ENCODE measurements at regions of chrX and their contacts with region 1.

Region 1: GRCh38 chrX:65595460-65595876 is 60.9 kb upstream of the LAS1L start:
- DNase-seq: peak; percentile 95
- H3K4me3 ChIP-seq: no peak overlapping the region
- H3K27ac ChIP-seq: peak overlapping the region; percentile 31
- H3K4me1 ChIP-seq: peaks cover 19% of the 10 kb centered on the region
- H3K27me3 ChIP-seq: no peaks in the 10 kb centered on the region
- CTCF ChIP-seq: peak; percentile 99

Region 2: GRCh38 chrX:64994131-64994798 is 601.2 kb before region 1 on chrX:
- CTCF ChIA-PET with region 1: no interaction called
- POLR2A ChIA-PET with region 1: no interaction called
- intact Hi-C with region 1: no loop called
- DNase-seq: no peak
- H3K4me3 ChIP-seq: no peak overlapping the region
- H3K27ac ChIP-seq: no peak overlapping the region
- H3K4me1 ChIP-seq: no peaks in the 10 kb centered on the region
- H3K27me3 ChIP-seq: no peaks in the 10 kb centered on the region
- CTCF ChIP-seq: no peak

Region 3: GRCh38 chrX:65045001-65045400 is 550.5 kb before region 1 on chrX:
- CTCF ChIA-PET with region 1: no interaction called
- POLR2A ChIA-PET with region 1: no interaction called
- intact Hi-C with region 1: no loop called
- DNase-seq: no peak
- H3K4me3 ChIP-seq: no peak overlapping the region
- H3K27ac ChIP-seq: no peak overlapping the region
- H3K4me1 ChIP-seq: no peaks in the 10 kb centered on the region
- H3K27me3 ChIP-seq: no peaks in the 10 kb centered on the region
- CTCF ChIP-seq: no peak

Region 4: GRCh38 chrX:65610040-65610439 is 14.6 kb after region 1 on chrX:
- CTCF ChIA-PET with region 1: no interaction called
- POLR2A ChIA-PET with region 1: no interaction called
- intact Hi-C with region 1: no loop called
- DNase-seq: peak; percentile 40
- H3K4me3 ChIP-seq: no peak overlapping the region
- H3K27ac ChIP-seq: no peak overlapping the region
- H3K4me1 ChIP-seq: no peaks in the 10 kb centered on the region
- H3K27me3 ChIP-seq: no peaks in the 10 kb centered on the region
- CTCF ChIP-seq: no peak

Region 5: GRCh38 chrX:65633826-65634225 is 38.4 kb after region 1 on chrX:
- CTCF ChIA-PET with region 1: no interaction called
- POLR2A ChIA-PET with region 1: no interaction called
- intact Hi-C with region 1: no loop called
- DNase-seq: no peak
- H3K4me3 ChIP-seq: no peak overlapping the region
- H3K27ac ChIP-seq: no peak overlapping the region
- H3K4me1 ChIP-seq: no peaks in the 10 kb centered on the region
- H3K27me3 ChIP-seq: no peaks in the 10 kb centered on the region
- CTCF ChIP-seq: no peak

Region 6: DNA sequence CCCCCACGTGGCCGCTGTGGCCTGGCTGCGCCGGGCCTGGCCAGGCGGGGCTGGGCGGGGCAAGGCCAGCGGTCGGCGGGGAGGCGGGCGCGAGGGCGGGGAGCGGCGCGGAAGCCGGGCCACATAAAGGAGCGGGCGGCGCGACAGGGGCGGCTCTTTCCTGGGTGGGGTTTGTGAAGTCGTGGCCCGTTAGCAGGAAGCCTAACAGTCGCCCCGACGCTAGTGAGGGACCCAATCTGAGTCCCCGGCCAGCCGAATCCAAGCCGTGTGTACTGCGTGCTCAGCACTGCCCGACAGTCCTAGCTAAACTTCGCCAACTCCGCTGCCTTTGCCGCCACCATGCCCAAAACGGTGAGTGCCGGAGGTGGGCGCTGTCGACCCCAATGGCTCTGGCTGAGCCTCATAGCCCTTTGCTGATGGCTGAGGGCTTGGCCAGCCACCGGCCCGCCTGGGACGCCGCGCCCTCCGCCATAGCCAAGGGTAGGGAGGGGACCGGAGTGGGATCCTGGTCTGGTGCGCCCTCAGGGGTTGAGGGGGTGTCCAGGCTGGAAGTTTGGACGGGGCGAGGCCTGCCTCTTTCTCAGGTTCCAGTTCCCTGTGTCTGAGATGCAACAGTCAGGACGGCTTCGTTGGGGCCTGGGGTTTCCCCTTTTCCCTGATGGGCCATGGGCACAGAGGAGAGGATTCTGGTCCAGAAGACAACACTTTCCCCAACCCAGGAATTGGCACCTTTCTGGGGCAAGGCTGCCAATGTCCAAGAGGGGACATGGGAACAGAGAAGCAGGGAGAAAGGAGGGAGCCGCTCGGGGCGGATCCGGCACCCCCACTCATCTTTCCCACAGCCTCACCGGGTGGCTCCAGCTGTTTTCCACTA is 72.3 kb after region 1 on chrX and contains the start of gene MSN:
- CTCF ChIA-PET with region 1: no interaction called
- POLR2A ChIA-PET with region 1: no interaction called
- intact Hi-C with region 1: loop called (anchors 5 kb)
- DNase-seq: peak; percentile 57
- H3K4me3 ChIP-seq: peak within 1 kb of the TSS; percentile 77
- H3K27ac ChIP-seq: peak within 1 kb of the TSS; percentile 93
- H3K4me1 ChIP-seq: peaks cover 20% of the 10 kb centered on the region
- H3K27me3 ChIP-seq: no peaks in the 10 kb centered on the region
- CTCF ChIP-seq: peak; percentile 33; the same call in 1 of the 2 replicates
- total RNA-seq, gene MSN: 415 and 468 TPM in 2 replicates

Region 7: DNA sequence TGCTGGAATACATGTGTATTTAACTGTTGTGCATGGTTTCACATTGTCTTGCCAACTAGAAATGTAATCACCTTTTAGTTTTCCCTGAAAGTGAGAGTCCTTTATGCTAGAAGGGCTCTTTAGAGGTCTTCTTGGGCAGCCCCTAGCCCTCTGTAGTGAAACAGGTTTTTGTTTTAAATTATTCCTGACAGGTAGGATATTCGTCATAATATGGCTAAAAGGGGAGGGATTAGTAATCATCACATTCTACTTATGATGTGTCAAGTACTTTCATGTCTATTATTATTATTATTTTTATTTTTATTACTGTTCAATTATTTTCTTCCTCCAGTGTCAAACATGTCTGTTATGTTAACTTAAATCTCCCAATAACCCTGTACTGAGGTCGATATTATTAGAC is 107.5 kb after region 1 on chrX:
- CTCF ChIA-PET with region 1: interaction called, 3 read pairs
- POLR2A ChIA-PET with region 1: interaction called, 7 read pairs
- intact Hi-C with region 1: loop called (anchors 5 kb)
- DNase-seq: no peak
- H3K4me3 ChIP-seq: no peak overlapping the region
- H3K27ac ChIP-seq: peak overlapping the region; percentile 68
- H3K4me1 ChIP-seq: peaks cover 51% of the 10 kb centered on the region
- H3K27me3 ChIP-seq: no peaks in the 10 kb centered on the region
- CTCF ChIP-seq: no peak

Region 8: DNA sequence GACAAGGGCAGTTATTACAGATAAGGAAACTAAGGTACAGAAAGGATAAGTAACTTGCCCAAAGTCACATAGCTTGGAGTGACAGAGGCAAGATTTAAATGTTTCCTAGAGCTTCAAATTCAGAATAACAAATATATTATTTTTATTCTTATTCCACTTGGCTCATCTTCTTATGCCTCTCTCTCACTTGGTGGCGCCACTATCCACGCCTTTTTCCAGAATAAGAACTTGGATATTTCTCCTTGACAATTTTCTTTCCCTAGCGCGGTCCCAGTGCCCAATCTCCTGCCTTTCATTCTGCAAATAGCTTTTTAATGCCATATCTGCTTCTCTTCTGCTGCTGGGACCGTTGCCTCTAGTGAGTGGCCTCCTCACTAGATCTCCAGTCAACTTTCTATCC is 150.5 kb after region 1 on chrX:
- CTCF ChIA-PET with region 1: no interaction called
- POLR2A ChIA-PET with region 1: no interaction called
- intact Hi-C with region 1: loop called (anchors 5 kb)
- DNase-seq: no peak
- H3K4me3 ChIP-seq: no peak overlapping the region
- H3K27ac ChIP-seq: no peak overlapping the region
- H3K4me1 ChIP-seq: no peaks in the 10 kb centered on the region
- H3K27me3 ChIP-seq: no peaks in the 10 kb centered on the region
- CTCF ChIP-seq: peak; percentile 38; the same call in 1 of the 2 replicates

Region 9: GRCh38 chrX:65985922-65986588 is 390.6 kb after region 1 on chrX:
- CTCF ChIA-PET with region 1: interaction called, 3 read pairs
- POLR2A ChIA-PET with region 1: no interaction called
- intact Hi-C with region 1: loop called (anchors 2 kb)
- DNase-seq: peak; percentile 85
- H3K4me3 ChIP-seq: no peak overlapping the region
- H3K27ac ChIP-seq: peak overlapping the region; percentile 49
- H3K4me1 ChIP-seq: peaks cover 4% of the 10 kb centered on the region
- H3K27me3 ChIP-seq: no peaks in the 10 kb centered on the region
- CTCF ChIP-seq: peak; percentile 62